Caco-2 (cell line): ENCODE measurements at regions of chr7 and their contacts with region 1.

Region 1: DNA sequence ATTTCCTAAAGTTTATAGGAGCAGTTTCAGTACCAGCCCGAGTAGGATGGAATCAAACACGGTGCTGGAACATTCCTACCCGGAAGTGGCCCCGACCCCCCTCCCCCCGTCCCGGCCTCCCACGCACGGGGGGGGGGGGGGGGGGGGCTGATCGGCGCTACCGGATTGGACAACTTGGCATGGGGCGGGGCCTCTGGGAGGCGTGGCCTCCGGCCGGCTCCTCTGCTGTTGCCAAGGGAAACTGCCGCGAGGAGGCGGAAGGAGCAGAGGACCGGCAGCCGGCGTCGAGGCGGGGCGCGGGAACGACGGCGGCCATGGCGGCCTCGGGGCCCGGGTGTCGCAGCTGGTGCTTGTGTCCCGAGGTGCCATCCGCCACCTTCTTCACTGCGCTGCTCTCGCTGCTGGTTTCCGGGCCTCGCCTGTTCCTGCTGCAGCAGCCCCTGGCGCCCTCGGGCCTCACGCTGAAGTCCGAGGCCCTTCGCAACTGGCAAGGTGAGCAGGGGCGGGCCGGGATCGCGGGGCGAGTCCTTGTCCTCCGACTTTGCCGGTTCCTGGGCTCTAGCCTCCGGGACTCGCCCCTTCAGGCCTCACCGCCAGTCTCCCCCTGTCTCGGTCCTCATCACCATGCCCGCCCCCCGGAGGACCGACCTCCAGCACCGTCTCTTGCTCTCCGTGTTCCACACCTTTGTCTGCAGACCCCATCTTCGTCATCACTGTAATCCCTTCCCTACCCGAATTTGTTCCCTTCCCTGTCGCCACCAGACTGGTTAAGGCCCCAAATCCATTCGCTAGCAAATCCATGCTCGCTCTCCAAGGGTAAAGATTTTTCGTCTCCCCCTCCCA is at the start of gene RHBDD2:
- DNase-seq: peak; percentile 95
- H3K4me3 ChIP-seq: peak within 1 kb of the TSS; percentile 81
- H3K4me3 Mint-ChIP-seq: peak within 1 kb of the TSS; percentile 94
- H3K27ac Mint-ChIP-seq: peak within 1 kb of the TSS; percentile 93
- H3K4me1 ChIP-seq: peaks cover 6% of the 10 kb centered on the region
- H3K4me1 Mint-ChIP-seq: peaks cover 8% of the 10 kb centered on the region
- H3K27me3 ChIP-seq: no peaks in the 10 kb centered on the region
- H3K27me3 Mint-ChIP-seq: no peaks in the 10 kb centered on the region
- CTCF ChIP-seq: peak in 1 of 2 experiments; percentile 10
- total RNA-seq, gene RHBDD2: 50.1 and 55.6 TPM in 2 replicates

Region 2: DNA sequence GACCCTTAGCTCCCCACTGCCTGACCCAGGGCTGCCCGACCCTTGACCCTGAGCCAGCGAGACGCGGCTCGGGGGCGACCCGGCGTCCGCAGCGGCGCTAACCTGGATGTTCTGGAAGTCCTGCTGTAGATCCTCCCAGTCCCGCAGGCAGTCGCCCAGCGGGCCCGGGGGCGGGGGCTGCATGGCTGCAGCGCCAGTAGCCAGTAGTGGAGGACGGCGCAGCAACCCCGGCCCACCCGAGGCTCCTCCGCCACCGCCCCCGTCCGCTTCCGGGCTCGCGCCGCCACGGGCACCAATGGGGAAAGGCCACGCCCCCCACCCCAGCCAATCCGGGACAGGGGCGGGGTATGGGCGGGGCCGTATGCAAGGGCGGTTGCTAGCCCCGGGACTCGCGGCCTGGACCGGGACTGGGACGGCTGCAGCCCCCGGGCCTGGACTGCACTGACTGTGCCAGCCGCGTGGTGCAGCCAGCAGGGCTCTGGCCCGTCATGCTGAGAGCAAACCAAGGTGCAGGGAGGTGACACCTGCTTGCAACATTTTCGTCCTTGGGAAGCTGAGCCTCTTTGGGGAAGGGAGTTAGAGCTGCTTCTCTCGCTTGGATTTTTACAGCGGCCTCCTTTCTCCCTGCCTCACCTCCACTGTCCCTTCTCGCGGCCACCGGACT is 115.5 kb after region 1 on chr7 and contains the start of gene TMEM120A:
- CTCF ChIA-PET with region 1: no interaction called
- POLR2A ChIA-PET with region 1: no interaction called
- intact Hi-C with region 1: loop called (anchors 10 kb)
- DNase-seq: peak; percentile 96 to 98
- H3K4me3 ChIP-seq: peak within 1 kb of the TSS; percentile 89
- H3K4me3 Mint-ChIP-seq: peak within 1 kb of the TSS; percentile 80
- H3K27ac Mint-ChIP-seq: peak within 1 kb of the TSS; percentile 87
- H3K4me1 ChIP-seq: peaks cover 40% of the 10 kb centered on the region
- H3K4me1 Mint-ChIP-seq: peaks cover 30% of the 10 kb centered on the region
- H3K27me3 ChIP-seq: no peaks in the 10 kb centered on the region
- H3K27me3 Mint-ChIP-seq: no peaks in the 10 kb centered on the region
- CTCF ChIP-seq: no peak
- total RNA-seq, gene TMEM120A: 65.4 and 71.1 TPM in 2 replicates